ENCODE measurements at regions of chr2 and their contacts with region 1.

Region 1: GRCh38 chr2:37600735-37601134 is 70.7 kb downstream of the CDC42EP3 start:
- DNase-seq: peak in 1 of 5 donors; percentile 19
- H3K4me3 ChIP-seq: peak overlapping the region; percentile 54 to 80
- H3K4me3 Mint-ChIP-seq: peak overlapping the region; percentile 91 to 99 (median 96)
- H3K27ac ChIP-seq: peak overlapping the region; percentile 79
- H3K27ac Mint-ChIP-seq: peak overlapping the region; percentile 94 to 99 (median 99)
- H3K4me1 ChIP-seq: peaks cover 53% of the 10 kb centered on the region
- H3K4me1 Mint-ChIP-seq: peaks cover 37 to 61% (median 45%) of the 10 kb centered on the region in 4 donors
- H3K27me3 ChIP-seq: no peaks in the 10 kb centered on the region
- H3K27me3 Mint-ChIP-seq: no peaks in the 10 kb centered on the region

Region 2: GRCh38 chr2:37456479-37456878 is 144.3 kb before region 1 on chr2:
- CTCF ChIA-PET with region 1: interaction called, 4 read pairs
- POLR2A ChIA-PET with region 1: interaction called, 17 read pairs
- intact Hi-C with region 1: no loop called
- DNase-seq: peak; percentile 50 to 65 (median 60)
- H3K4me3 ChIP-seq: no peak overlapping the region
- H3K4me3 Mint-ChIP-seq: peak overlapping the region in 7 of 8 donors; percentile 43 to 83 (median 63)
- H3K27ac ChIP-seq: peak overlapping the region; percentile 43
- H3K27ac Mint-ChIP-seq: peak overlapping the region; percentile 72 to 90 (median 84)
- H3K4me1 ChIP-seq: peaks cover 89% of the 10 kb centered on the region
- H3K4me1 Mint-ChIP-seq: peaks cover 65 to 82% (median 76%) of the 10 kb centered on the region in 4 donors
- H3K27me3 ChIP-seq: no peaks in the 10 kb centered on the region
- H3K27me3 Mint-ChIP-seq: no peaks in the 10 kb centered on the region

Region 3: GRCh38 chr2:37489041-37489456 is 111.7 kb before region 1 on chr2:
- CTCF ChIA-PET with region 1: no interaction called
- POLR2A ChIA-PET with region 1: no interaction called
- intact Hi-C with region 1: no loop called
- DNase-seq: no peak
- H3K4me3 ChIP-seq: no peak overlapping the region
- H3K4me3 Mint-ChIP-seq: no peak overlapping the region
- H3K27ac ChIP-seq: no peak overlapping the region
- H3K27ac Mint-ChIP-seq: no peak overlapping the region
- H3K4me1 ChIP-seq: no peaks in the 10 kb centered on the region
- H3K4me1 Mint-ChIP-seq: peaks cover 0 to 5% (median 0%) of the 10 kb centered on the region in 4 donors
- H3K27me3 ChIP-seq: no peaks in the 10 kb centered on the region
- H3K27me3 Mint-ChIP-seq: peaks cover 1 to 4% of the 10 kb centered on the region in 2 donors

Region 4: GRCh38 chr2:37570773-37571586 is 29.8 kb before region 1 on chr2:
- CTCF ChIA-PET with region 1: interaction called, 6 read pairs
- POLR2A ChIA-PET with region 1: interaction called, 18 read pairs
- intact Hi-C with region 1: loop called (anchors 5 kb)
- DNase-seq: no peak
- H3K4me3 ChIP-seq: no peak overlapping the region
- H3K4me3 Mint-ChIP-seq: no peak overlapping the region
- H3K27ac ChIP-seq: no peak overlapping the region
- H3K27ac Mint-ChIP-seq: no peak overlapping the region
- H3K4me1 ChIP-seq: peaks cover 11% of the 10 kb centered on the region
- H3K4me1 Mint-ChIP-seq: peaks cover 14 to 39% (median 20%) of the 10 kb centered on the region in 4 donors
- H3K27me3 ChIP-seq: no peaks in the 10 kb centered on the region
- H3K27me3 Mint-ChIP-seq: no peaks in the 10 kb centered on the region

Region 5: GRCh38 chr2:37623971-37624900 is 23.5 kb after region 1 on chr2:
- CTCF ChIA-PET with region 1: interaction called, 44 read pairs
- POLR2A ChIA-PET with region 1: interaction called, 242 read pairs
- intact Hi-C with region 1: no loop called
- DNase-seq: peak in 2 of 5 donors; percentile 20 to 43
- H3K4me3 ChIP-seq: peak overlapping the region in 1 of 2 donors; percentile 36
- H3K4me3 Mint-ChIP-seq: peak overlapping the region; percentile 1 to 83 (median 78)
- H3K27ac ChIP-seq: peak overlapping the region; percentile 66
- H3K27ac Mint-ChIP-seq: peak overlapping the region; percentile 87 to 97 (median 91)
- H3K4me1 ChIP-seq: peaks cover 75% of the 10 kb centered on the region
- H3K4me1 Mint-ChIP-seq: peaks cover 52 to 84% (median 68%) of the 10 kb centered on the region in 4 donors
- H3K27me3 ChIP-seq: no peaks in the 10 kb centered on the region
- H3K27me3 Mint-ChIP-seq: no peaks in the 10 kb centered on the region

Region 6: GRCh38 chr2:37648331-37649011 is 47.7 kb after region 1 on chr2:
- CTCF ChIA-PET with region 1: interaction called, 34 read pairs
- POLR2A ChIA-PET with region 1: interaction called, 129 read pairs
- intact Hi-C with region 1: no loop called
- DNase-seq: peak; percentile 42 to 76 (median 50)
- H3K4me3 ChIP-seq: peak overlapping the region in 1 of 2 donors; percentile 50
- H3K4me3 Mint-ChIP-seq: peak overlapping the region in 7 of 8 donors; percentile 66 to 91 (median 80)
- H3K27ac ChIP-seq: peak overlapping the region; percentile 56
- H3K27ac Mint-ChIP-seq: peak overlapping the region; percentile 85 to 98 (median 92)
- H3K4me1 ChIP-seq: peaks cover 97% of the 10 kb centered on the region
- H3K4me1 Mint-ChIP-seq: peaks cover 76 to 96% (median 88%) of the 10 kb centered on the region in 4 donors
- H3K27me3 ChIP-seq: no peaks in the 10 kb centered on the region
- H3K27me3 Mint-ChIP-seq: no peaks in the 10 kb centered on the region

Region 7: DNA sequence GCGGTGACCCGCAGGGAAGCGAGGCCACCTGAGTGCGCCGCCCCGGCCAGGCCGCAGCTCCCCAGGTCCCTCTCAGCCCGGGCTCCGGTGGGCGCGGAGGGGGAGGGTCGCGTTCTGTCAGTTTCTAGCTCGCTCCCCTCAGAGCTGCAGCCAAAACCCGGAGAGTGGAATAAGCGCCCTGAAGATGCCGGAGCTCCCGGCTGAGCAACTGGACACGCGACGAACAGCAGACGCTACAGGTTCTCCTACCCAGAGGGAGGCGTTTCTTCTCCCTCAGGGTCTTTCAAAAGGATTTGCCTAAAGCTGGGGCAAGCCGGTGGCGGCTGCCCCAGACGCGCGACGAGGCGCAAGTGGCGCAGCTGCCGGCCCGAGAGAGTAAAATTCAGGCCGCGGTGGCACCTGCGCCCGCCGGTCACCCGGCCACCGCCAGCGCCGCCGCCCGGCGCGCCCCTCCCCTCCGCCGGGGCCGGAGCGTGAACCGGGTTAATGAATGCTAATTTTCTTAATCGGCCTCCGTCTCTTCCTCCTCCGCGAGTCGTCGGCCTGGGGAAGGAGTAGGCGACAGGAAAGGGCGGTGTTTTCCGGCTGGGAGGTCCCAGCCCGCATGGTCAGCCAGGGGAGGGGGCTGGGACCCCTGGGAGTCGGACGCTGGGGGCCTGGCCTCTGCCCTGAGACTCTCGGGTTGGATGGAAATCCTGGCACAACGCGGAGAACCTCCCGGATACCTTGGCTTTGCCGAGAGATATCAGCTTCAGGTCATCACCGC is 71.6 kb after region 1 on chr2:
- CTCF ChIA-PET with region 1: no interaction called
- POLR2A ChIA-PET with region 1: interaction called, 116 read pairs
- intact Hi-C with region 1: loop called (anchors 2 kb)
- DNase-seq: peak; percentile 56 to 78 (median 70)
- H3K4me3 ChIP-seq: peak overlapping the region; percentile 65 to 89
- H3K4me3 Mint-ChIP-seq: peak overlapping the region; percentile 83 to 97 (median 90)
- H3K27ac ChIP-seq: peak overlapping the region; percentile 85
- H3K27ac Mint-ChIP-seq: peak overlapping the region; percentile 87 to 95 (median 90)
- H3K4me1 ChIP-seq: peaks cover 34% of the 10 kb centered on the region
- H3K4me1 Mint-ChIP-seq: peaks cover 26 to 57% (median 42%) of the 10 kb centered on the region in 4 donors
- H3K27me3 ChIP-seq: no peaks in the 10 kb centered on the region
- H3K27me3 Mint-ChIP-seq: no peaks in the 10 kb centered on the region

Region 8: GRCh38 chr2:37912056-37912455 is 311.3 kb after region 1 on chr2:
- CTCF ChIA-PET with region 1: no interaction called
- POLR2A ChIA-PET with region 1: no interaction called
- intact Hi-C with region 1: no loop called
- DNase-seq: no peak
- H3K4me3 ChIP-seq: no peak overlapping the region
- H3K4me3 Mint-ChIP-seq: no peak overlapping the region
- H3K27ac ChIP-seq: no peak overlapping the region
- H3K27ac Mint-ChIP-seq: no peak overlapping the region
- H3K4me1 ChIP-seq: no peaks in the 10 kb centered on the region
- H3K4me1 Mint-ChIP-seq: no peaks in the 10 kb centered on the region
- H3K27me3 ChIP-seq: no peaks in the 10 kb centered on the region
- H3K27me3 Mint-ChIP-seq: peaks cover 0 to 13% of the 10 kb centered on the region in 2 donors